K562 (cell line): ENCODE measurements at regions of chr7 and their contacts with region 1.

Region 1: DNA sequence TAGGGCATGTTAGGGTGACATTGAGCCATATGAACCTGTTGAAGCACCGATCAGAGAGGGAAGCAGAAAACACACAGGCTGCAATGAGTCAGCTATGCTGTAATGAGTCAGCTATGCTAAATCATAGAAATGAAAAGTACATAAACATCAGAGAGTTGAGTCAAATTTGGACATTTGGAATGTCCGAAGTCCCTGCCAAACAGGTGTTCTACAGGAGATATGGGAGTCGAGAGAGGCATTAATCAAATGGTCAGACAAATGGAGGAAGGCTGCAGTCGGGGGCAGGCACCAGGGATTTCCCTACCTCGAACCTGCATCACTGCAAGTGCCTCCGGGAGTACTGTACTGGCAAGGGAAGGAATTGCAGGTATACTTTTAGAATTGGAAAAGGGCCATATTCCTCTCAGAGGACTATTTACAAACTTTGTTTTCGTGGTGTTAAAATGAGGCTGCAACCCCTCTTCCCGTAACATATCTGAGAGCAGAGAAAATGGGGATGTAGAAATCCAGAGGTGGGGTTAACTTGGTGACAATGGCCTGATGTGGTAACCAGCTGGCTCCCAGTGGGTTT is 8.8 kb upstream of the ZC3HAV1 start:
- DNase-seq: peak; percentile 79 to 90 (median 82)
- ATAC-seq: peak; percentile 82
- H3K4me3 ChIP-seq: no peak overlapping the region
- H3K27ac ChIP-seq: peak overlapping the region; percentile 76
- H3K4me1 ChIP-seq: peaks cover 22 to 32% of the 10 kb centered on the region in 2 experiments
- H3K27me3 ChIP-seq: no peaks in the 10 kb centered on the region
- CTCF ChIP-seq: peak; percentile 10 to 39 (median 18); a peak in 2 of 6 replicates
- EP300 ChIP-seq: peak; percentile 92
- POLR2A ChIP-seq: no peak
- RAD21 ChIP-seq: 0 out of 4 replicates have a peak, but pooled peaks of 1 of the 2 experiments have one; percentile 6

Region 2: DNA sequence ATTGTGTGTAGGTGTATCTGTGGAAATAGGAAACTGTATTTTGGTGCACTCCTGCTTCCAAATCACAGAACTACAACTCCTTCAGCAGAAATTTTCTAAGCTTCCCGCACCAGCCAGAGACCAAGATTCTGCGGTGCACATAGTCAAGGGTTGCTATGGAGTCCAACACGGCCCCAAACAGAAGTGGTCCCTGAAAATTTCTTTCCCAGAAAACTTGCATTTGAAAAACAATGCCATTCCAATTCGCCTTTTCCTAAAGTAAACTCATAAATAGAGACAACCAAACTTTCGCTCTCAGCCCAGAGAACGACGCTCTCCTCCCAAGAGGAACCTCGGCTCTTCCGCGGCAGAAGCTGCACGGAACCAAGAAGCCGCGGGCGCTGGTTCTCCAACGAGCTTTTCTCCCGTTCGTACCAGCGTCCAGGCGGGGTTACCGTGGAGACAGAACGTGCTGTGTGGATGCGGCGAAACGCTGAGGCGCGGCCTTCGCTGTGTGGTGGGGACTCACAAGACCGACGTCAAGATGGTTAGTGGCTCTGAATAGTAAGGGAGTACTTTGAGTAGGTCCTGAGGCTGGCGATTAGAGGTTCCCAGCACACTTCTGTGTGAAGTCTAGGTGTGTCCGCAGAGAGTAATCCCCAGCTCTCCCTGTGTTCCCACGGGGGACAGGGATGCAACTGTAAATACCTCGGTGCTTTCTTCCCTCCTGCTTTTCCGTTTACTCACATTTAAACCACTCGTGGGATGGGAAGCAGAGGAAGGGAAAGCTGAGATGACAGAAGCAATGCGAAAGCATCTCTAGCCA is 15.2 kb after region 1 on chr7:
- CTCF ChIA-PET with region 1: no interaction called
- POLR2A ChIA-PET with region 1: interaction called, 13 read pairs
- in situ Hi-C with region 1: no loop called
- intact Hi-C with region 1: no loop called
- DNase-seq: peak; percentile 75 to 97 (median 84)
- ATAC-seq: peak; percentile 99
- H3K4me3 ChIP-seq: peak overlapping the region; percentile 40
- H3K27ac ChIP-seq: peak overlapping the region; percentile 9; the same call in 2 of the 3 replicates
- H3K4me1 ChIP-seq: no peaks in the 10 kb centered on the region; a peak in 1 of 5 replicates
- H3K27me3 ChIP-seq: no peaks in the 10 kb centered on the region
- CTCF ChIP-seq: 0 out of 6 replicates have a peak, but pooled peaks of 1 of the 3 experiments have one; percentile 9
- EP300 ChIP-seq: peak; percentile 58
- POLR2A ChIP-seq: peak; percentile 82
- RAD21 ChIP-seq: peak; percentile 46 to 54; a peak in 3 of 4 replicates